GM13976 (cell line): ENCODE measurements at regions of chr11 and their contacts with region 1.

Region 1: GRCh38 chr11:76207642-76208401 is 1.5 kb upstream of the WNT11 start:
- DNase-seq: peak; percentile 92
- CTCF ChIP-seq: peak; percentile 95

Region 2: GRCh38 chr11:76318744-76319384 is 111.0 kb after region 1 on chr11:
- in situ Hi-C with region 1: loop called (anchors 10 kb)
- DNase-seq: peak; percentile 88
- CTCF ChIP-seq: peak; percentile 96

Region 3: DNA sequence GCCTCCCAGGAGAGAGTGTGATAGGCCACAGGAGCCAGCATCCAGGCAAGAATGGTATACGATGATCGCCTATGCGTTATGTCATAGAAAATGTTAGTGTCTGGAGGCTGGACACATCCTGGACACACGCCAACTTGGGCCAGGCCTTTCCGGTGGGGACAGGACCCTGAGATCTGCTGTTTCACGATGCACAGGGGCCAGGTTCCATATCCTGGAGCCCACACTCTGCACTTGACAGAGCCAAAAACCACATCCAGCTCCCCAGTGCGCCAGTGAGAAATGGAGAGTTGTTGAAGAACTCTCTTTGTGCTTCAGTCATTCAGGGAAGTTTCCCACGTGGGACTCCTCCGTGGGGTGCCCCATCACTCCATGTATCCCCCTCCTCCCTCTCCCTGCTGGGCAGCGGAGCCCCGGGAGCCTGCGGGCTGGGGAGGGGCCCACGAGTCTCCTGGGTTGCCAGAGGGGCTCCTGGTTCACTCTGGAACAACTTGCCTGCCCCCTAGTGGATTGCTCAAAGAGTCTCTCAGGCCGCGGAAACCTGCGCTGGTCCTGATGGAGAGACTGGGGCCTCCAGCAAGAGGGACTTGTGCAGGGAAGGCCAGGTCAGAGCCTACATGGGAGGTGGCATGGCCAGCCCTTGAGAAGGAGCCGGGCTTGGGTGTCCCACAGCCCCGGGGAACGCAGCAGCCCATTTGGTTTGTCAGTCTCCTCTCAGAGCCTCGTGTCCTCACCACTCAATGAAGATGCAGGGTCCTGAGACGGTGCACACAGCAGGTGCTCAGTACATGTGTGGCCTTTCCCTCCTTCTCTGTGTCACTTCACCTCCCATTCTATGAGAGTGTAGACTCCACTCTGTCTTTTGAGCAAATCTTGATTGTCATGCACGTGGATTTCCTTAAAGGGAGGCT is 472.9 kb after region 1 on chr11:
- in situ Hi-C with region 1: loop called (anchors 25 kb)
- DNase-seq: peak; percentile 86
- CTCF ChIP-seq: peak; percentile 66